Activated CD4-positive, alpha-beta T cell treated with anti-CD3 and anti-CD28 coated beads, Interleukin-2, amount 10 ng/mL, durations not matched to agents 7 days and 5 days (primary cell): ENCODE measurements at regions of chr2 and their contacts with region 1.

Region 1: DNA sequence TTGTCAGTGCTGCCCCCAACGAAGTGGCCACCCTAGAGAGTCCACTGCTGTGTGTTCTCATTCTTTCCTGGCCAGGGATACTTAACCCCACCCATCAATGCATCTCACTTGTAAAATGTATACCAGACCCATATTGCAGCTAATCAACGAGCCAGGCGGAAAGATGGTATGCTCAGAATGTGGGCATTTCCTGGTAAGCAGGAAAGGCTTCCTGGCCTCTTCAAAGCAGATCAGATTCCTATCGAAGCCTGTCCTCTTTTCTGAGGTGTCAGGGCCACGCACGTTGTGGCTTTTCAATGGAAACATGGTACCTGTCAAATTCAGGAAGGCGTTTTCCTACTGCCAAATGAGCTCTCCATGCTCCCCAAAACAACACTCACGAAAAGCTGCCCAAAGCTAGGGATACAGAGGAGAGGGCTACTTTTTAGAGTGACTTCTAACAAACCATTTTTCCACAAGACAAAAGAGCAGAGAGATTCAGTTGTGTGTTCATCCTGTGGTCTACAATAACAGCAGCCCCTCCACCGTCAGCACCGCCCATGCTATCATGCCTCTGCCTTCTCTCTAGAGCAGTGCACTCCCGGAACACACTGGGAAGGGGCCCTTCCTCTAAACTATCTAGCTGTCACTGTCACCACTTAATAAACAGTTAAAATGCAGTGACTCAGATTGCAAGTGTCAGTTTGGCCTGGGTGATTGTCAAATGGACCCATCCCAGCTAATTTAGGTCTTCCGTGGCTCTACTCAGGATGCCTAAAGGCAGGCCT is 535.1 kb downstream of the RNF144A start:
- DNase-seq: peak; percentile 31
- H3K4me3 Mint-ChIP-seq: no peak overlapping the region
- H3K27ac Mint-ChIP-seq: peak overlapping the region; percentile 94
- H3K4me1 Mint-ChIP-seq: peaks cover 67% of the 10 kb centered on the region
- H3K27me3 Mint-ChIP-seq: no peaks in the 10 kb centered on the region

Region 2: GRCh38 chr2:7467782-7468447 is 15.6 kb after region 1 on chr2:
- CTCF ChIA-PET with region 1: interaction called, 10 read pairs
- POLR2A ChIA-PET with region 1: no interaction called
- DNase-seq: peak; percentile 38
- H3K4me3 Mint-ChIP-seq: no peak overlapping the region
- H3K27ac Mint-ChIP-seq: peak overlapping the region; percentile 81
- H3K4me1 Mint-ChIP-seq: peaks cover 21% of the 10 kb centered on the region
- H3K27me3 Mint-ChIP-seq: no peaks in the 10 kb centered on the region